Aorta (tissue), 5 donors: ENCODE measurements at regions of chr20 and their contacts with region 1.

Region 1: DNA sequence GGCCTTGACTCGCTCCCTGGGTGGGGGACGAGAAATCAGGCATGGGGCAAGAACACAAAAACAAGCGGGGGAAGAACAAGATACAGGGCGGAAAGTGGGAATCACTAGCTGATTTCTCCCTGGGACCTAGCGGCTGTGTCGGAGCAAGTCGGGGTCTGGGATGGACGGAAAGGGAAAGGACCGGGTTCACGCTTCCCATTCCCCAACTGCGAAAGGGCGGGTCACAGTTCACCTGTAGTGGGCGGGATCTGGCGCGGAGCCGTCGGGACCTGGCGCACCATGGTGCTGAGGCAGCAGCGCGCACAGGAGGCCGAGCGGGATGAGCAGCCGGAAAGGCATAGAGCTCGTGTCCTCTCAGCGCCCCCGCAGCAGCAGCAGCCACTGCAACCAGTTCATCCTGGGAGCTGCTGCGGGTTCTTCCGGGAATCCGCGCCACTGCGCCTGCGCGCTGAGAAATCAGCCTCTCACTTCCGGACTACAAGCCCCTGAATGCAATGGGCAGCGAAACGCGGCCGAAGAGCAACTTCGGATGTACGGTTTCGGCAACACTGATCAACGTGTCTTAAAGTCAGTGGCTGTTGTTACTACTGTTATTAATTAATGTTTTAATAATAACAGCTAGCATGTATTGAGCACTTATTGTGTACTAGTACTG is at the start of gene EDEM2:
- DNase-seq: peak; percentile 96 to 99
- ATAC-seq: peak; percentile 96
- H3K4me3 ChIP-seq: peak within 1 kb of the TSS; percentile 45 to 49
- H3K27ac ChIP-seq: peak within 1 kb of the TSS in 1 of 2 donors; percentile 10
- H3K4me1 ChIP-seq: no peaks in the 10 kb centered on the region
- H3K27me3 ChIP-seq: no peaks in the 10 kb centered on the region
- total RNA-seq, gene EDEM2: 21.6 to 23.4 TPM

Region 2: GRCh38 chr20:35277531-35278395 is 130.7 kb after region 1 on chr20 and contains the start of gene MMP24OS:
- intact Hi-C with region 1: loop called in 1 of 2 experiments (anchors 5 kb)
- DNase-seq: peak; percentile 95 to 96
- ATAC-seq: peak; percentile 96
- H3K4me3 ChIP-seq: peak within 1 kb of the TSS; percentile 54 to 65
- H3K27ac ChIP-seq: peak within 1 kb of the TSS; percentile 51 to 93
- H3K4me1 ChIP-seq: no peaks in the 10 kb centered on the region
- H3K27me3 ChIP-seq: no peaks in the 10 kb centered on the region
- total RNA-seq, gene MMP24OS: 58.6 to 79.2 TPM

Region 3: GRCh38 chr20:35329435-35330139 is 182.5 kb after region 1 on chr20:
- intact Hi-C with region 1: no loop called
- DNase-seq: no peak
- ATAC-seq: no peak
- H3K4me3 ChIP-seq: no peak overlapping the region
- H3K27ac ChIP-seq: no peak overlapping the region
- H3K4me1 ChIP-seq: peaks cover 0 to 2% of the 10 kb centered on the region in 2 donors
- H3K27me3 ChIP-seq: no peaks in the 10 kb centered on the region

Region 4: DNA sequence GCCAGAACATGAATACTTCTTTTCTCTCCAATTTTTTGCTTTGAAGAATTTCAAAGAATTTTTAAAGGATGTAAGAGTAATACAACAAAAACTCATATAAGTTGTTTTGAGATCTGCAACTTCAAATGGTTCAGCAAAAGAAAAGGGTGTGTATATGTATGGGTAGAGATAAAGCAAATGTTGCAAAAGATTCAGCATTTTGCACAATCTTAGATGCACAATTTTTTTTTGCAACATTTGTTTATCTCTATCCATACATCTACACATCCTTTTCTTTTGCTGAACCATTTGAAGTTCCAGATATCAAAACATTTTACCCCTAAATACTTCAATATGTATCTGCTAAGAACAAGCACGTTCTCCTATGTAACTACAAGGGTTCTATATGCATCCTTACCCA is 192.6 kb after region 1 on chr20:
- intact Hi-C with region 1: no loop called
- DNase-seq: no peak
- ATAC-seq: no peak
- H3K4me3 ChIP-seq: no peak overlapping the region
- H3K27ac ChIP-seq: no peak overlapping the region
- H3K4me1 ChIP-seq: peaks cover 0 to 2% of the 10 kb centered on the region in 2 donors
- H3K27me3 ChIP-seq: no peaks in the 10 kb centered on the region